ENCODE measurements at regions of chr11 and their contacts with region 1.

Region 1: DNA sequence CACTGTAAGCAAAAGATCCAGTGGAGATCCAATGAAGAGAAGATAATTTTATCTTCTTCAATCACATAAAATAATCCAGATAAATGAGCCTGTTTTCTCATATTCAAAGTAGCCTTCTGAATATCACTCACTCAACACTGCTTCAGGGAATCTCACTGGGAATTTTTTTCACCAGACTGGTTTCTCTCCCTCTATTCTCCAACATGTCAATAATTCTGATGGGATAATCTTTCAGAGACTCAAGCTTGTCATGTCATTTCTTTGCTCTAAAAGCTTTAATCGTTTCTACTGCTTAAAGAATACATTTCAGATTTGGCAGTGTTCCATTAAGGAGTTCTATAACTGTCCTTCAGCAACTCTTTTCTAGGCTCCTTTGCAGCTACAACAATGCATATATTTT is 16.3 kb downstream of the CNTN5 start:
- DNase-seq: no peak
- H3K4me3 ChIP-seq: no peak overlapping the region
- H3K27ac ChIP-seq: no peak overlapping the region
- H3K4me1 ChIP-seq: no peaks in the 10 kb centered on the region
- H3K27me3 ChIP-seq: no peaks in the 10 kb centered on the region
- CTCF ChIP-seq: no peak
- POLR2A ChIP-seq: no peak

Region 2: DNA sequence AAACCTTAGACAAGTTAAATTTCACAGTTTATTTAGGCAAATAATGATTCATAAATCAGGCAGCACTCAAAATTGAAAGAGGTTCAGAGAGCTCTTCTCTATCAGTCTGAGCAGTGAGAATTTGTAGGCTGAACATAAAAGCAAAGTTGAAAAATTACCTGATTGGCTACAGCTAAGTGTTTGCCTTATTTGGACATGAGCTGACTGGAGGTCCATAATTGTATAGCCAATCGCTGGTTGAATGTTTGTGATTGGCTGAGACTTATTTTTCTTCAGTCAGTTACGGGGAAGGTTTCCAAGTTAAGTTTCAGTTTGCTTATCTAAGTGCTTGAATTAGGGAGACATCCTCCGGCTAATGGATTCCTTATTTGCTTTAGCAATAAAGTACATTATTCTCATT is 511.2 kb after region 1 on chr11:
- intact Hi-C with region 1: no loop called
- DNase-seq: no peak
- H3K4me3 ChIP-seq: no peak overlapping the region
- H3K27ac ChIP-seq: no peak overlapping the region
- H3K4me1 ChIP-seq: no peaks in the 10 kb centered on the region
- H3K27me3 ChIP-seq: no peaks in the 10 kb centered on the region
- CTCF ChIP-seq: no peak
- POLR2A ChIP-seq: no peak

Region 3: DNA sequence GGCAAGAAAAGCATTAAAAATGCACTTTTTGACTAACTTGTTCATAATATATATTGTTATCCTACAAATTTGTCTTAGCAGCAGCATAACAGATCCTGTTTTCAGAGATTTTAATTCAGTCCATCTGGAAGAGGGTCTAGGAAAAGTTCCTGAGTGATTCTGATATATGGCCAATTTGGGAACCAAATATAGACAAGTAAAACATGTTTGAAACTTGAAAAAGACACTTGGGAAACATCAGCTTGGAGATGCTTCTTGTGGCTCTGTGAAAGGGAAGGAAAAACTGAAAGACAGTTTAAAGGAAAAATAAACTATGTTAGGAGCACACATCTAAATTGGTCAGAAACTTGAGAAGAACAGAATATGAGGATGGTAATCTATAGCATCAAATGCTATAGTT is 681.2 kb after region 1 on chr11:
- intact Hi-C with region 1: loop called (anchors 10 kb)
- DNase-seq: no peak
- H3K4me3 ChIP-seq: no peak overlapping the region
- H3K27ac ChIP-seq: no peak overlapping the region
- H3K4me1 ChIP-seq: no peaks in the 10 kb centered on the region
- H3K27me3 ChIP-seq: no peaks in the 10 kb centered on the region
- CTCF ChIP-seq: no peak
- POLR2A ChIP-seq: no peak

Measured in breast epithelium (tissue), 4 donors.